ENCODE measurements at regions of chr19 and their contacts with region 1.

Region 1: GRCh38 chr19:12757544-12758274 is 6.1 kb downstream of the BEST2 start:
- DNase-seq: peak; percentile 70
- ATAC-seq: peak; percentile 80
- H3K4me3 Mint-ChIP-seq: peak overlapping the region; percentile 23
- H3K27ac Mint-ChIP-seq: no peak overlapping the region
- H3K4me1 Mint-ChIP-seq: peaks cover 5% of the 10 kb centered on the region
- H3K27me3 Mint-ChIP-seq: peaks cover 15% of the 10 kb centered on the region

Region 2: GRCh38 chr19:12722566-12723380 is 34.9 kb before region 1 on chr19:
- CTCF ChIA-PET with region 1: interaction called, 157 read pairs
- DNase-seq: peak; percentile 98
- ATAC-seq: peak; percentile 88
- H3K4me3 Mint-ChIP-seq: peak overlapping the region; percentile 83
- H3K27ac Mint-ChIP-seq: peak overlapping the region; percentile 91
- H3K4me1 Mint-ChIP-seq: peaks cover 38% of the 10 kb centered on the region
- H3K27me3 Mint-ChIP-seq: no peaks in the 10 kb centered on the region

Region 3: DNA sequence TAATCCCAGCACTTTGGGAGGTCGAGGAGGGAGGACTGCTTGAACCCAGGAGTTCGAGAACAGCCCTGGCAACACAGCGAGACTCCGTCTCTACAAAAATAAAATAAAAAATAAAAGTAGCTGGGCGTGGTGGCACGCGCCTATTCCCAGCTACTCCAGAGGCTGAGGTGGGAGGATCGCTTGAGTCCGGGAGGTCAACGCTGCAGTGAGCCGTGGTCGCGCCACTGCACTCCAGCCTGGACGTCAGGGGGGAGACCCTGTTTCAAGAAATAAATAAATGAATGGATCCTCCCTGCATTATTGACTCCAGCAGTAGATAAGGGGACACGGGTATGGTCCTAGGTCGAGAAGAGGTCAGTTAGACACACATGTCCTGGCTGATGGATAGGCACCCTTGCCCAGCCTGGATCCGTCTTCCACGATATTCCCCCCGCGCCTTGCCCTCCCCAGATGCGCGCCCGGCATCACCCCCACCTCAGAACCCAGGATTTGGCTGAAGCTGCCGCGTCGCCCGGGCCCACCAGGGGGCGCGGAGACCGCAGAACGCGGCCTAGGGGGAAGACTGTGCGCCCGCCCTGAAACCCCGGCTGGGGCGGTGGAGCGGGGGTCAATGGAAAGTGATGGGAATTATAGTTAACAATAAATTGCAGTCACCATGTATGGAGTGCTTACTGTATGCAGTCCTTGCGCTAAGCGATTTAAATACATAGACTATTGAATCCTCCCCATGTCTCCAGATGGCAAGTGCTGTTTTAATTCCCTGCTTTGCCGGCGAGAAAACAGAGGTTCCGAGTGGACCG is 19.7 kb after region 1 on chr19:
- CTCF ChIA-PET with region 1: interaction called, 132 read pairs
- DNase-seq: peak; percentile 87
- ATAC-seq: peak; percentile 41
- H3K4me3 Mint-ChIP-seq: peak overlapping the region; percentile 76
- H3K27ac Mint-ChIP-seq: peak overlapping the region; percentile 97
- H3K4me1 Mint-ChIP-seq: peaks cover 37% of the 10 kb centered on the region
- H3K27me3 Mint-ChIP-seq: no peaks in the 10 kb centered on the region